ENCODE measurements at regions of chr17 and their contacts with region 1.

Region 1: GRCh38 chr17:74961657-74962490 is 10.7 kb downstream of the HID1 start:
- DNase-seq: peak; percentile 71 to 86 (median 78)
- H3K4me3 ChIP-seq: no peak overlapping the region
- H3K4me3 Mint-ChIP-seq: no peak overlapping the region
- H3K27ac ChIP-seq: no peak overlapping the region
- H3K27ac Mint-ChIP-seq: peak overlapping the region in 3 of 8 donors; percentile 11 to 77 (median 14)
- H3K4me1 ChIP-seq: no peaks in the 10 kb centered on the region
- H3K4me1 Mint-ChIP-seq: peaks cover 4 to 11% (median 7%) of the 10 kb centered on the region in 3 donors
- H3K27me3 ChIP-seq: no peaks in the 10 kb centered on the region
- H3K27me3 Mint-ChIP-seq: peaks cover 0 to 4% of the 10 kb centered on the region in 2 donors

Region 2: GRCh38 chr17:74790161-74791054 is 171.5 kb before region 1 on chr17:
- CTCF ChIA-PET with region 1: interaction called, 12 read pairs
- POLR2A ChIA-PET with region 1: no interaction called
- DNase-seq: no peak
- H3K4me3 ChIP-seq: peak overlapping the region; percentile 8
- H3K4me3 Mint-ChIP-seq: peak overlapping the region in 1 of 7 donors; percentile 15
- H3K27ac ChIP-seq: no peak overlapping the region
- H3K27ac Mint-ChIP-seq: peak overlapping the region in 4 of 8 donors; percentile 4 to 52 (median 13)
- H3K4me1 ChIP-seq: peaks cover 37% of the 10 kb centered on the region
- H3K4me1 Mint-ChIP-seq: peaks cover 18 to 26% (median 18%) of the 10 kb centered on the region in 3 donors
- H3K27me3 ChIP-seq: no peaks in the 10 kb centered on the region
- H3K27me3 Mint-ChIP-seq: no peaks in the 10 kb centered on the region

Region 3: DNA sequence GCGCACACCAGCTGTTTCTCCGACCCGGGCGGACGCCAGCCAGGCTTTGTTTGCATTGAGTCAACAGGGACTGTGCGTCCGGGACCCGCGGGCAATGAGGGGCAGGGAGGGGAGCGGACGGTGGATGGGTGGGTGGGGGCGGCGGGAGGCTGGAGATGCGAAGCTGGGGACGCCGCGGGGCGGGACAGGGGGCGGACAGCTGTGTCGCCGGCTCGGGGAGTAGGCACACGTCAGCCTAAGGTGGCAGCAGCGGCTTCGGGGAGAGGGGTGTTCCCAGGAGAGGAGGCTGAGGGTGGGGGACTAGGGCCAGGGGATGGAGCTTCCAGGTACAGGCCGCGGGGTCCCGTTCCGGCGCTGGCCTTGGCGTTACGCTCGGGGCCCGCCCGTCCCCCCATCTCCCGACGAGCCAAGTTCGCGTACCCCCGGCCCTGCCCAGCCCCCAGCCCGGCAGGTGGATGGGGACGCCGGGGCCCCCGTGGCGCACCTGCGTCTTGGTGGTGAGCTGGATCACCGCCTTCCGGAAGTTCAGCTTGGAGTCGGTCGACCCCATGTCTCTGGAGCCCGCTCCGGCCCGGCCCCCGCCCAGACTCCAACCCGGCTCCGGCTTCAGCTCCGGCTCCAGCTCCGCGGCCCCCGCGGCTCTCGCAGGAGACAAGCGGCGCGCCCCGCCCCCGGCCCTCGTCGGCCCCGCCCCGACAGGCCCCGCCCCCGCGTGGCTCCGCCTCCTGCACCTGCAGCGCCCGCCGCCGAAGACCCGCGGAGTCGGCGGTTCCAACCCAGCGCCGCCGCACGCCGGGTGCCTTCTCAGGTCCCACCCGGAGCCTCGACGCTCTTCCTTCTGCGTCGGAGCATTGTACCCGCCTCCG is 10.5 kb after region 1 on chr17 and contains the start of gene HID1:
- CTCF ChIA-PET with region 1: interaction called, 84 read pairs
- POLR2A ChIA-PET with region 1: interaction called, 6 read pairs
- DNase-seq: peak; percentile 69 to 87 (median 77)
- H3K4me3 ChIP-seq: peak within 1 kb of the TSS; percentile 64
- H3K4me3 Mint-ChIP-seq: peak within 1 kb of the TSS; percentile 79 to 90 (median 84)
- H3K27ac ChIP-seq: no peak within 1 kb of the TSS
- H3K27ac Mint-ChIP-seq: peak within 1 kb of the TSS in 5 of 8 donors; percentile 48 to 88 (median 68)
- H3K4me1 ChIP-seq: peaks cover 13% of the 10 kb centered on the region
- H3K4me1 Mint-ChIP-seq: peaks cover 5 to 20% (median 6%) of the 10 kb centered on the region in 3 donors
- H3K27me3 ChIP-seq: peaks cover 8% of the 10 kb centered on the region
- H3K27me3 Mint-ChIP-seq: peaks cover 4 to 22% of the 10 kb centered on the region in 2 donors
- total RNA-seq, gene HID1: 0.91 to 2.3 TPM

Region 4: DNA sequence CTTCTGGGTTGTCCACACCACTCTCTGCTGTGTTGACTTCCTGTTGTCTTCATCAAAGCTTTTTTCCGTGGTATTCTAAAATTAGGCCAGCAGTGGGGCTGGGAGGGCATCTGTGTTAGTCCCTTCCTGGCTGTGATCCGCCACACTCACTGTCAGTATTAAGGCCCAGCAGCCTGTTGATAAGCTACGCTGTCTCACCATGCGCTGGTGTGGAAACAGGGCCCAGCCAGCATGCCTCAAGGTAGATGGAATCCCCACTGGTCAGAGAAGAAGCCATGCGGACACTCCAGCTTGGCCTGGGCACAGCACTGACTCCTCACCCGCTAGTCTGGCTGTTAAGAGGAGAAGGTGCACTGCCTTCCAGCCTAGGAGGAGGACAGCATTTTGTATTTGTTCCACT is 36.9 kb after region 1 on chr17:
- CTCF ChIA-PET with region 1: interaction called, 10 read pairs
- POLR2A ChIA-PET with region 1: no interaction called
- DNase-seq: no peak
- H3K4me3 ChIP-seq: no peak overlapping the region
- H3K4me3 Mint-ChIP-seq: no peak overlapping the region
- H3K27ac ChIP-seq: no peak overlapping the region
- H3K27ac Mint-ChIP-seq: peak overlapping the region in 1 of 8 donors; percentile 37
- H3K4me1 ChIP-seq: no peaks in the 10 kb centered on the region
- H3K4me1 Mint-ChIP-seq: no peaks in the 10 kb centered on the region
- H3K27me3 ChIP-seq: no peaks in the 10 kb centered on the region
- H3K27me3 Mint-ChIP-seq: peaks cover 0 to 6% of the 10 kb centered on the region in 2 donors

Region 5: GRCh38 chr17:75012346-75013091 is 50.6 kb after region 1 on chr17 and contains the start of gene MRPL58:
- CTCF ChIA-PET with region 1: interaction called, 48 read pairs
- POLR2A ChIA-PET with region 1: interaction called, 3 read pairs
- DNase-seq: peak; percentile 60 to 84 (median 76)
- H3K4me3 ChIP-seq: peak within 1 kb of the TSS; percentile 90
- H3K4me3 Mint-ChIP-seq: peak within 1 kb of the TSS; percentile 92 to 99 (median 95)
- H3K27ac ChIP-seq: peak within 1 kb of the TSS; percentile 73
- H3K27ac Mint-ChIP-seq: peak within 1 kb of the TSS; percentile 81 to 96 (median 92)
- H3K4me1 ChIP-seq: peaks cover 15% of the 10 kb centered on the region
- H3K4me1 Mint-ChIP-seq: peaks cover 28 to 44% (median 35%) of the 10 kb centered on the region in 3 donors
- H3K27me3 ChIP-seq: no peaks in the 10 kb centered on the region
- H3K27me3 Mint-ChIP-seq: no peaks in the 10 kb centered on the region
- total RNA-seq, gene MRPL58: 65.5 to 68.8 TPM

Region 6: GRCh38 chr17:75109407-75110233 is 147.7 kb after region 1 on chr17 and contains the start of gene ARMC7:
- CTCF ChIA-PET with region 1: interaction called, 18 read pairs
- POLR2A ChIA-PET with region 1: no interaction called
- DNase-seq: peak; percentile 86 to 92 (median 88)
- H3K4me3 ChIP-seq: peak within 1 kb of the TSS; percentile 93
- H3K4me3 Mint-ChIP-seq: peak within 1 kb of the TSS; percentile 87 to 93 (median 91)
- H3K27ac ChIP-seq: peak within 1 kb of the TSS; percentile 59
- H3K27ac Mint-ChIP-seq: peak within 1 kb of the TSS; percentile 81 to 96 (median 91)
- H3K4me1 ChIP-seq: peaks cover 28% of the 10 kb centered on the region
- H3K4me1 Mint-ChIP-seq: peaks cover 29 to 42% (median 36%) of the 10 kb centered on the region in 3 donors
- H3K27me3 ChIP-seq: no peaks in the 10 kb centered on the region
- H3K27me3 Mint-ChIP-seq: no peaks in the 10 kb centered on the region
- total RNA-seq, gene ARMC7: 15.2 to 15.9 TPM

Region 7: DNA sequence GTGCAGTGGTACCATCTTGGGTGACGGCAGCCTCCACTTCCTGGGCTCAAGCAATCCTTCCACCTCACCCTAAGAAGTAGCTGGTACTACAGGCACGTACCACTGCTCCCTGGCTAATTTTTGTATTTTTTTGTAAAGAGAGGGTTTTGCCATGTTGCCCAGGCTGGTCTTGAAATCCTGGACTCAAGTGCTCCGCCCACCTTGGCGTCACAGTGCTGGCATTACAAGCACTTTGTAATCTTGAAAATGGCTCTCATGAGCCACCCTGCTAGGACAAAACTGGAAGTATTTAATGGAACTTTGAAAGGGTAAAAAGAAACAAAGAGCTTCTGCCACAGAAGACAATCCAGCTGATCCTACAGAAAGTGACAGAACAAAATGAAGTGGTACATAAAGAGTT is 211.7 kb after region 1 on chr17:
- CTCF ChIA-PET with region 1: interaction called, 10 read pairs
- POLR2A ChIA-PET with region 1: interaction called, 3 read pairs
- DNase-seq: no peak
- H3K4me3 ChIP-seq: no peak overlapping the region
- H3K4me3 Mint-ChIP-seq: no peak overlapping the region
- H3K27ac ChIP-seq: no peak overlapping the region
- H3K27ac Mint-ChIP-seq: peak overlapping the region in 3 of 8 donors; percentile 26 to 58 (median 29)
- H3K4me1 ChIP-seq: peaks cover 8% of the 10 kb centered on the region
- H3K4me1 Mint-ChIP-seq: peaks cover 14 to 28% (median 17%) of the 10 kb centered on the region in 3 donors
- H3K27me3 ChIP-seq: no peaks in the 10 kb centered on the region
- H3K27me3 Mint-ChIP-seq: no peaks in the 10 kb centered on the region